Activated CD8-positive, alpha-beta T cell treated with anti-CD3 and anti-CD28 coated beads, Interleukin-2, amount 10 ng/mL, durations not matched to agents 7 days and 5 days (primary cell): ENCODE measurements at regions of chr6 and their contacts with region 1.

Region 1: GRCh38 chr6:42928986-42929820 is at the start of gene CNPY3:
- DNase-seq: peak; percentile 98
- ATAC-seq: peak; percentile 87
- H3K4me3 Mint-ChIP-seq: peak within 1 kb of the TSS; percentile 90
- H3K27ac Mint-ChIP-seq: peak within 1 kb of the TSS; percentile 94
- H3K4me1 Mint-ChIP-seq: peaks cover 41% of the 10 kb centered on the region
- H3K27me3 Mint-ChIP-seq: no peaks in the 10 kb centered on the region
- total RNA-seq, gene CNPY3: 86.0 to 87.6 TPM

Region 2: DNA sequence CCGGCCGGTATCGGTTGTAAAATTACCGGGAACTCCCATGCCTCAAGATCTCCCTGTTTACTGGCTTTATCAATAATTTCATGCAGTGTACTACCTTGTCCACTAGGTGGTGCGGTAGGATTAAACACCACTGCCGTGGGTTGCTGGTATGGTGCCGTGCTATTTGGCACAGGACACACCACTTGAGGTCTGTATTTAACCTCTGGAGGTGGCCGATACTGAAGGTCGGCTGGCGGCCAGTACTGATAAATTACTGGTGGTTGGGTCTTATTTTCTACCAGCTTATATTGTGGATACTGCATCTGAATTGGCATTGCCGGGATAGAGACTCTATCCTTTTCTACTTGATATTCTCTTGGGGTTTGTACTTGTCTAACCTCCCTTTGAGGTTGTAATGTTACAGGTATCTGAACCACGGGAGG is 27.7 kb before region 1 on chr6:
- CTCF ChIA-PET with region 1: interaction called, 14 read pairs
- POLR2A ChIA-PET with region 1: no interaction called
- DNase-seq: peak; percentile 84
- ATAC-seq: peak; percentile 98
- H3K4me3 Mint-ChIP-seq: no peak overlapping the region
- H3K27ac Mint-ChIP-seq: peak overlapping the region; percentile 7
- H3K4me1 Mint-ChIP-seq: peaks cover 17% of the 10 kb centered on the region
- H3K27me3 Mint-ChIP-seq: no peaks in the 10 kb centered on the region

Region 3: GRCh38 chr6:42978839-42979522 is 49.8 kb after region 1 on chr6 and contains the start of gene PEX6:
- CTCF ChIA-PET with region 1: interaction called, 11 read pairs
- POLR2A ChIA-PET with region 1: interaction called, 46 read pairs
- DNase-seq: peak; percentile 96
- ATAC-seq: peak; percentile 90
- H3K4me3 Mint-ChIP-seq: peak within 1 kb of the TSS; percentile 85
- H3K27ac Mint-ChIP-seq: peak within 1 kb of the TSS; percentile 94
- H3K4me1 Mint-ChIP-seq: peaks cover 38% of the 10 kb centered on the region
- H3K27me3 Mint-ChIP-seq: no peaks in the 10 kb centered on the region
- total RNA-seq, gene PEX6: 11.1 to 12.0 TPM

Region 4: DNA sequence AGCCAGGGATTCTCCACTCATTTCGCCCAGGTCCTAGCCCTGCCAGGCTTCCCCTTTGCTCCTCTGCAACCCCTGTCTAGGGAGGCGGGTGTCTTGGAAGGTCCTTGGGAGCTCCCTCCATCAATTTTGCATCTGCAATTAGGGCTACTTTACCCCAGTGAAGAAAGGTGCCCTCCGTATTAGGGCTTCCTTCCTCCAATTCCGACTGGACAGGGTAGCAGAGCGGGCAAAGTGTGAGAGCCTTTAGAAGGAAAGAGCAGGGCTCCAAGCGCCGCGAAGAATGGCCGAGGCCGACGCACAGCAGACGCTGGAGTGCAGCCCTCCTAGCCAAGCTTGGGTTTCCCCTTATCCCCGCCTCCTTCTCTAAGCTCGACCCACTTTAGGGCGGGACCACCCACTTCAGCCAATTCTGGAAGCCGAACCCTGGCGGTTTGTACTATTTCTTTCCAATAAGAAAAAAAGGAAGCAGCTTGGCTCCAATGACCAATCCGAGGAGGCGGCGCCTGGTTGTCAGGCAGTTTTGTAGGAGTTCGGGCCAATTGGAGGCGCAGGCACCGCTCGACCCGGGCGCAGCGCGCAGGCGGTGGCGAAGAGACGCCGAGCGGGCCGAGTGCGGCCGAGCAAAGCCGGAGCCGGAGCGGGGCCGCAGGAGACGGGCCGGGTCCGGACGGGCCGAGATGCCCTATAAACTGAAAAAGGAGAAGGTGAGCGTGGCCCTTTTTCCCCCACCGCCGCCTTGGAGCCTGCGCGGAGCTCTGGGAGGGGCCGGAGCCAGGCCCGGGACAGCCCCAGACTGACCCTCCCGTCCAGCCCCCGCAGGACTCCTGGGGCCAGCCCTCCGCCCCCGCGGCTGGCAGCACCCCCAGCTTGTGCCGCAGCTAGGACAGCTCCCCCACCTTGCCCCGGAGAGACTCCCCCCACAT is 55.1 kb after region 1 on chr6 and contains the start of gene PPP2R5D:
- CTCF ChIA-PET with region 1: interaction called, 11 read pairs
- POLR2A ChIA-PET with region 1: interaction called, 46 read pairs
- DNase-seq: peak; percentile 99
- ATAC-seq: peak; percentile 96
- H3K4me3 Mint-ChIP-seq: peak within 1 kb of the TSS; percentile 88
- H3K27ac Mint-ChIP-seq: peak within 1 kb of the TSS; percentile 90
- H3K4me1 Mint-ChIP-seq: peaks cover 51% of the 10 kb centered on the region
- H3K27me3 Mint-ChIP-seq: no peaks in the 10 kb centered on the region
- total RNA-seq, gene PPP2R5D: 63.1 to 66.5 TPM

Region 5: DNA sequence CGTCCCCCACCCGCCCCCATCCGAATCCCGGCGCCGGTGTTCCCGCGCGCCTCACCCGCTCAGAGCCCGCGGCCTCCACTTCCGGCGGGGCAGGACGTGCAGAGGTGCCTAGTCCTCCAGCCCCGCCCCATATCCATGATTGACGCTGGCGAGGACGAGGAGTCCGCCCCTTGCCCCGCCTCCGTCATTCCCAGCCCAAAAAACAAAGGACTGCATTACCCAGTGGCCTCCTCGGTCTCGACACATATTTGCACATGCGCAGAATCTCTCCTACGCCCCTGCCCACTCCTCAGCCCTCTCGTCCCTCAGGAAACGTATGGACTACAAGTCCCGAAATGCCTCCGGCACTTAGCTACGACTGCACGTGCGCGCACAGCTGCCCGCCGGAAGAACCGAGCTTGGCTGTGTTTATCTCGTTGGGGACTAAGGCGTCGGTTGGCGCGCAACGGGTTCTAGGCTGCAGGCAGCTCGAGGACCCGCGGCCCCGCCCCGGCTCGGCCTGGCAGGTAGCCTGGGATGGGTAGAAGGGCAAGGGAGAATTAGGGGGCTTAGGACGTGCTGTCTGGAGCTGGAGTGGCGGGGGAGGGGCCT is 84.7 kb after region 1 on chr6 and contains the starts of genes KLHDC3 and MEA1:
- CTCF ChIA-PET with region 1: interaction called, 3 read pairs
- POLR2A ChIA-PET with region 1: interaction called, 12 read pairs
- DNase-seq: peak; percentile 100
- ATAC-seq: peak; percentile 95
- H3K4me3 Mint-ChIP-seq: peak within 1 kb of the TSS; percentile 97
- H3K27ac Mint-ChIP-seq: peak within 1 kb of the TSS; percentile 90
- H3K4me1 Mint-ChIP-seq: peaks cover 43% of the 10 kb centered on the region
- H3K27me3 Mint-ChIP-seq: no peaks in the 10 kb centered on the region
- total RNA-seq, gene KLHDC3: 75.4 to 76.0 TPM
- total RNA-seq, gene MEA1: 77.1 to 84.1 TPM

Region 6: GRCh38 chr6:43174263-43175112 is 245.3 kb after region 1 on chr6:
- CTCF ChIA-PET with region 1: no interaction called
- POLR2A ChIA-PET with region 1: interaction called, 11 read pairs
- DNase-seq: peak; percentile 98
- ATAC-seq: peak; percentile 73
- H3K4me3 Mint-ChIP-seq: peak overlapping the region; percentile 96
- H3K27ac Mint-ChIP-seq: peak overlapping the region; percentile 86
- H3K4me1 Mint-ChIP-seq: peaks cover 53% of the 10 kb centered on the region
- H3K27me3 Mint-ChIP-seq: no peaks in the 10 kb centered on the region